ENCODE measurements at regions of chr4 and their contacts with region 1.

Region 1: GRCh38 chr4:104818579-104818978 is 323.9 kb upstream of the CXXC4 start:
- DNase-seq: no peak
- H3K4me3 ChIP-seq: no peak overlapping the region
- H3K27ac ChIP-seq: no peak overlapping the region
- H3K4me1 ChIP-seq: no peaks in the 10 kb centered on the region
- H3K27me3 ChIP-seq: no peaks in the 10 kb centered on the region
- CTCF ChIP-seq: no peak

Region 2: DNA sequence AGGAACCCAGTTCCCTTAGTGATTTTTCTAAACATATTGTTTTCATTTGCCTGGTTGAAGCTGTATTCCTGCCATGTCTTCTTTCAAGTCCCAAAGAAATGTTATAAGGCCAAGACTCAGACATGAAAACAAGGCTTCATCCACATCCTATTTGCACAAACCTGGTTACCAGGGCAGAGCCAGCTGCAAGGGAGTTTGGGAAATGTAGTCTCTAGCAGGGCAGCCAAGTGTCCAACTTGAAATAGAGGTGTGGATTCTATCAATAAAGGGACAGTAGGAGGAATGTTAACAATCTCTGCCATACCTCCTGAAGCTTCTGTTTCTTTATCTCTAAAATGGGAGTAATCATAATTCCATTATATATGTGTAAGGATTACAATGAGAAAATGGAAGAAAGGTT is 833.3 kb after region 1 on chr4:
- CTCF ChIA-PET with region 1: interaction called, 14 read pairs
- POLR2A ChIA-PET with region 1: no interaction called
- intact Hi-C with region 1: no loop called
- DNase-seq: no peak
- H3K4me3 ChIP-seq: no peak overlapping the region
- H3K27ac ChIP-seq: no peak overlapping the region
- H3K4me1 ChIP-seq: peaks cover 3% of the 10 kb centered on the region; the same call in 1 of the 2 replicates
- H3K27me3 ChIP-seq: no peaks in the 10 kb centered on the region
- CTCF ChIP-seq: no peak